H1 (cell line): ENCODE measurements at regions of chr3 and their contacts with region 1.

Region 1: DNA sequence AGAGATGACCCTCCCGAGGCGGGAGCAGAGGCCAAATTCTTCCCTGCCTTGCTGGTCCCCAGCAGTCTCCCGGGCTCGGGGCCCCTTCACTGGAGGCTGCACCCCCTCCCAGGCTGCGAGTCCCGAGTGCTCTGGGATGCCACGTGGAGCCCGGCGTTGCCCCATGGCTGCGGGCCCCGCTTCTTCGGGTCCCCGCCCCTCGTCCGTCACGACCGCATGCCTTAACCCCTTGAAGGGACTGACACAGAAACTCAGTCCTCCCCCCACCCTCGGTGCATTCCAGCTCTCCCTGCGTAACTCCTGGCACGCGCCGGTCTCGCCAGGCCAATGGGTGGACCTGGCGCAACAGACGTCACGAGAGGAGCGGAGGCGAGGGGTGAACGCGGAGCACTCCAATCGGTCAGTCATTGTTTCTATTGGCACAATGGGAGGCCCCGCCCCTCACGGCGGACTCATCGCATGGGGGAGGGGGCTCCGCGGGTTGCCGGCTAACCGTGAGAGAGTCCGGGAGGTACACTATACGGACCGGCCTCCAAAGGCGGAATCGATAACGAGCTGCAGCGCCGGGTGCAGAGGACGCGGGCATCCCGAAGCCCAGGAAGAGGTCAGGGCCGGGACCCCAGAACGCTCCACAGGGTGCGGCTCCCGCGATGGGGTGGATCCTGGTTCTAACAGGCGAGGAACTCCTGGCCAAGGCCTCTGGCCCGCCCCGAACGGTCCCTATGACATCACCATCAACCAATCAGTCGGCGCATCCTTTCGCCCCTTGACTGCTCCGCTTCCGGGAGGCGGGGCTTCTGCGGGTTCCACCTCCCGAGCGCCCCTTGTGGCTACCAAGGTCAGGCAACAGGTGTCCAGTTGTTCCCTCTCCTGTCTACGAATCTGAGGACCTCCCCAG is 978 bp upstream of the CELSR3 start:
- DNase-seq: peak; percentile 99
- H3K4me3 ChIP-seq: peak overlapping the region; percentile 73 to 84 (median 82)
- H3K27ac ChIP-seq: peak overlapping the region; percentile 97
- H3K4me1 ChIP-seq: peaks cover 0 to 11% (median 7%) of the 10 kb centered on the region in 4 experiments; a peak in 5 of 7 replicates
- H3K27me3 ChIP-seq: 0 out of 7 replicates have a peak, but pooled peaks cover 0 to 4% (median 0%) of the 10 kb centered on the region in 4 experiments
- CTCF ChIP-seq: peak in 2 of 3 experiments; percentile 67 to 91; a peak in 3 of 4 replicates
- EP300 ChIP-seq: peak in 1 of 2 experiments; percentile 85; a peak in 1 of 3 replicates
- POLR2A ChIP-seq: peak in 1 of 2 experiments; percentile 68; a peak in 2 of 3 replicates
- RAD21 ChIP-seq: 0 out of 4 replicates have a peak, but pooled peaks have one; percentile 10 to 13

Region 2: DNA sequence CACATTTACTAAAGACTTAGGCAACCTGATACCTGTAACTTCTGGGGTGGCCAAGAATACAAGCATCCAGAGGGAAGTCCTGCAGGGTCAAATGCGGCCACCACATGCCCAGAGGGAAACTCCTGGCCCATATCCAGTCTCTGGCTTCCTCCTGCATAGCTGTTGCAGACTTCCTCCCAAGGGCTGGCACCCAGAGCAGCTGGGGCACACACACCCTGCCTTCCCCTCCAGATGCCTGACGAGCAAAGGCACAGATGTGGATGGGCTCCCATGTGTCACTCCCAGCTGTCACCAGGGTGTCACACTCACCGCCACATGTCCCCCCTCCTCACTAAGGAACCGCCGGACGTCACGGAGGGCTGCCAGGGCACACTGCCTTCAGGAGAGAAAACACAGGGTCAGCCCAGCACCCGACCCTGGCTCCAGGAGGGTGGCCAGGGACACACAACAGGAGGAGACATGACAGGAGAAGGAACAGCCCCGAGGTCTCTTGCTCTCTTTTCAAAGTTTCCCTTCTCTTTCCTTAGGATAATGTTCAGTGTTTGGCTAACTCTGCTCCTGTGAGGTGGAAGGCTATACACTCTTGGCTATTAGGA is 120.3 kb before region 1 on chr3:
- CTCF ChIA-PET with region 1: no interaction called
- POLR2A ChIA-PET with region 1: no interaction called
- DNase-seq: no peak
- H3K4me3 ChIP-seq: no peak overlapping the region
- H3K27ac ChIP-seq: no peak overlapping the region
- H3K4me1 ChIP-seq: no peaks in the 10 kb centered on the region; a peak in 2 of 7 replicates
- H3K27me3 ChIP-seq: no peaks in the 10 kb centered on the region
- CTCF ChIP-seq: no peak
- EP300 ChIP-seq: no peak
- POLR2A ChIP-seq: no peak
- RAD21 ChIP-seq: no peak

Region 3: GRCh38 chr3:48556793-48557626 is 106.7 kb before region 1 on chr3 and contains the start of gene PFKFB4:
- CTCF ChIA-PET with region 1: interaction called, 3 read pairs
- POLR2A ChIA-PET with region 1: interaction called, 17 read pairs
- DNase-seq: peak; percentile 99 to 100
- H3K4me3 ChIP-seq: peak within 1 kb of the TSS; percentile 67 to 90 (median 73)
- H3K27ac ChIP-seq: peak within 1 kb of the TSS; percentile 67
- H3K4me1 ChIP-seq: peaks cover 4 to 33% (median 22%) of the 10 kb centered on the region in 4 experiments
- H3K27me3 ChIP-seq: no peaks in the 10 kb centered on the region
- CTCF ChIP-seq: peak in 1 of 3 experiments; percentile 36; a peak in 1 of 4 replicates
- EP300 ChIP-seq: no peak
- POLR2A ChIP-seq: peak in 1 of 2 experiments; percentile 82; a peak in 2 of 3 replicates
- RAD21 ChIP-seq: no peak
- total RNA-seq, gene PFKFB4: 10.7 and 11.3 TPM in 2 replicates

Region 4: GRCh38 chr3:48623851-48624547 is 39.7 kb before region 1 on chr3:
- CTCF ChIA-PET with region 1: interaction called, 5 read pairs
- POLR2A ChIA-PET with region 1: interaction called, 27 read pairs
- DNase-seq: no peak
- H3K4me3 ChIP-seq: no peak overlapping the region
- H3K27ac ChIP-seq: peak overlapping the region; percentile 35; the same call in 1 of the 2 replicates
- H3K4me1 ChIP-seq: peaks cover 0 to 6% (median 3%) of the 10 kb centered on the region in 4 experiments; a peak in 3 of 7 replicates
- H3K27me3 ChIP-seq: no peaks in the 10 kb centered on the region
- CTCF ChIP-seq: no peak
- EP300 ChIP-seq: no peak
- POLR2A ChIP-seq: peak in 1 of 2 experiments; percentile 9; a peak in 1 of 3 replicates
- RAD21 ChIP-seq: no peak

Region 5: GRCh38 chr3:48674505-48674904 is 10.8 kb after region 1 on chr3:
- CTCF ChIA-PET with region 1: interaction called, 21 read pairs
- POLR2A ChIA-PET with region 1: interaction called, 175 read pairs
- DNase-seq: no peak
- H3K4me3 ChIP-seq: no peak overlapping the region
- H3K27ac ChIP-seq: no peak overlapping the region
- H3K4me1 ChIP-seq: no peaks in the 10 kb centered on the region
- H3K27me3 ChIP-seq: no peaks in the 10 kb centered on the region
- CTCF ChIP-seq: no peak
- EP300 ChIP-seq: no peak
- POLR2A ChIP-seq: no peak
- RAD21 ChIP-seq: no peak

Region 6: DNA sequence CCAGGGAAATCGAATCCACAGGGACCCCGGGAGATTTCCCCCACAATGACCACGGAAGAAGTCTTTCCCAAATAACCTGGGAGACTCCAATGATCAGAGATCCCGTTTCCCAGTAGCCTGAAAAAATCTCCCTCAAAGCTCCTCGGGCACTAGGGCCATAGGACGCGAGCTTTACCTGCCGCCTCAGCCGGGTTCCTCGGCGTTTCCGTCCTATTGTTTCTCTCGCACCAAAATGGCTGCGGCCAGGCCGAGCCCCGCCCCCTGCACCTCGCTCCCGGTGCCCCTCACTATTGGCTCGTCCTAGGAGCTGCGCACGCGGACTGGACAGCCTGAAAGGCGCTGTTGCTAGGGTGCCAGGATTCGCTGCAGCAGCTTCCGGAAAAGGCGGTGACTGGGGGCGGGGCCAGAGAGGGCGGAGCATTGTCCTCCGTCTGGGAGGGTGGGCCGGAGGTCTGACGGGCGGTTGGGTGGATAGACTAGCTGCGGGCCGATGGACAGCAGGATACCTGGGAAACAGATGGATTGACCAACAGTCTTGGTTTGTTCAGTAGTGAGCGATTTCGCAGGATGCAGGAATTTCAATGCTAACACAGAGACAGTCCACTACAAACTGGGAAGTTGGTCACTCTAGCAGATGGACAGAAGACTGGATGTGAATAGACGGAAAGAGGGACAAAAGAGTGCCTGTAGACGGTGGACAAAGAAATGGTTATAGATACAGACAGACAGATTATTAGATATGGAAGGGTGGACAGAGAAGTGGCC is 53.5 kb after region 1 on chr3 and contains the start of gene IP6K2:
- CTCF ChIA-PET with region 1: no interaction called
- POLR2A ChIA-PET with region 1: interaction called, 29 read pairs
- DNase-seq: peak; percentile 97 to 100
- H3K4me3 ChIP-seq: peak within 1 kb of the TSS; percentile 94 to 100 (median 97)
- H3K27ac ChIP-seq: peak within 1 kb of the TSS; percentile 98
- H3K4me1 ChIP-seq: peaks cover 0 to 11% (median 3%) of the 10 kb centered on the region in 4 experiments; a peak in 5 of 7 replicates
- H3K27me3 ChIP-seq: no peaks in the 10 kb centered on the region
- CTCF ChIP-seq: no peak
- EP300 ChIP-seq: no peak
- POLR2A ChIP-seq: peak; percentile 89
- RAD21 ChIP-seq: no peak
- total RNA-seq, gene IP6K2: 89.4 and 95.8 TPM in 2 replicates

Region 7: DNA sequence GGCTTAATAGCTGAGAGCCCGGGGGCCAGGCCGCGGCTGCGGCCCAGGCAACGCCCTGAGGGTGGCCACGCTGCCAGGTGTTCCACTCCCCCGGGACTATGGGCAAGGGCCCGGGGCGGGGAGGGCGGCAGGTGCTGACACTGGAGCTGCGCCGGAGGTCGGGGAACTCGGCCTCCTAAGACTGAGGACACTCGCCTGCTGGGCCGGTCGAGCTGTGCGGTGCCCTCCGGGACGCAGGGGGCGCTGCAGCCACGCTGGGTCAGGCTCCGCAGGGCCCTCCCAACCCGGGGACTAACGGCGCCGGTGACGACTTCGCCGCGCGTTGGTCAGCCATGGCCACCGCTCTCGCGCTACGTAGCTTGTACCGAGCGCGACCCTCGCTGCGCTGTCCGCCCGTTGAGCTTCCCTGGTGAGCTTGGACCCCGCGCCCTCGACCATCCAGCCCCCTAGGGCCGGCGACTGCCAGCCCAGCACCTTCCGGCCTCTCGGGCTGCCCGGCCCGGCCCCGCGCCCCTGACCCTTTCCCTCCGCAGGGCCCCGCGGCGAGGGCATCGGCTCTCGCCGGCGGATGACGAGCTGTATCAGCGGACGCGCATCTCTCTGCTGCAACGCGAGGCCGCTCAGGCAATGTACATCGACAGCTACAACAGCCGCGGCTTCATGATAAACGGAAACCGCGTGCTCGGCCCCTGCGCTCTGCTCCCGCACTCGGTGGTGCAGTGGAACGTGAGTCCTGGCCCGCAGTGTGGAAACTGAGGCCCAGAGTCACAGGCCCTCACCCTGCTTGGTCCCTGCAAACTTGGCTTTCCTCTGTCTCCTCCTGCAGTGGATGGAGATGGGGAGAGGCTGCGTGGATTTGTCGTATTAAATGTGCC is 358.4 kb after region 1 on chr3 and contains the start of gene NDUFAF3:
- CTCF ChIA-PET with region 1: interaction called, 3 read pairs
- POLR2A ChIA-PET with region 1: interaction called, 12 read pairs
- DNase-seq: peak; percentile 82 to 98
- H3K4me3 ChIP-seq: peak within 1 kb of the TSS; percentile 84 to 97 (median 95)
- H3K27ac ChIP-seq: peak within 1 kb of the TSS; percentile 91
- H3K4me1 ChIP-seq: peaks cover 0 to 21% (median 13%) of the 10 kb centered on the region in 4 experiments; a peak in 6 of 7 replicates
- H3K27me3 ChIP-seq: no peaks in the 10 kb centered on the region; a peak in 1 of 7 replicates
- CTCF ChIP-seq: peak in 2 of 3 experiments; percentile 87 to 96; a peak in 3 of 4 replicates
- EP300 ChIP-seq: no peak; a peak in 1 of 3 replicates
- POLR2A ChIP-seq: peak in 1 of 2 experiments; percentile 88; a peak in 2 of 3 replicates
- RAD21 ChIP-seq: peak; percentile 25 to 41; a peak in 3 of 4 replicates
- total RNA-seq, gene NDUFAF3: 26.2 and 27.8 TPM in 2 replicates